Activated B cell treated with CpG ODN at 0.5 μM for 24 hours (primary cell): ENCODE measurements at regions of chr6 and their contacts with region 1.

Region 1: GRCh38 chr6:70221025-70221714 is 81.7 kb downstream of the COL9A1 start:
- DNase-seq: no peak
- ATAC-seq: peak; percentile 68
- H3K4me3 Mint-ChIP-seq: no peak overlapping the region
- H3K27ac Mint-ChIP-seq: no peak overlapping the region
- H3K4me1 Mint-ChIP-seq: peaks cover 6% of the 10 kb centered on the region
- H3K27me3 Mint-ChIP-seq: peaks cover 3% of the 10 kb centered on the region
- CTCF ChIP-seq: no peak

Region 2: GRCh38 chr6:70079241-70079640 is 141.9 kb before region 1 on chr6:
- CTCF ChIA-PET with region 1: no interaction called
- POLR2A ChIA-PET with region 1: no interaction called
- intact Hi-C with region 1: no loop called
- DNase-seq: no peak
- ATAC-seq: no peak
- H3K4me3 Mint-ChIP-seq: no peak overlapping the region
- H3K27ac Mint-ChIP-seq: no peak overlapping the region
- H3K4me1 Mint-ChIP-seq: no peaks in the 10 kb centered on the region
- H3K27me3 Mint-ChIP-seq: no peaks in the 10 kb centered on the region
- CTCF ChIP-seq: no peak

Region 3: GRCh38 chr6:70231311-70231710 is 10.1 kb after region 1 on chr6:
- CTCF ChIA-PET with region 1: interaction called, 25 read pairs
- POLR2A ChIA-PET with region 1: no interaction called
- intact Hi-C with region 1: no loop called
- DNase-seq: no peak
- ATAC-seq: no peak
- H3K4me3 Mint-ChIP-seq: no peak overlapping the region
- H3K27ac Mint-ChIP-seq: no peak overlapping the region
- H3K4me1 Mint-ChIP-seq: no peaks in the 10 kb centered on the region
- H3K27me3 Mint-ChIP-seq: peaks cover 6% of the 10 kb centered on the region
- CTCF ChIP-seq: no peak

Region 4: GRCh38 chr6:70310063-70310694 is 89.0 kb after region 1 on chr6:
- CTCF ChIA-PET with region 1: interaction called, 4 read pairs
- POLR2A ChIA-PET with region 1: no interaction called
- intact Hi-C with region 1: loop called (anchors 5 kb)
- DNase-seq: no peak
- ATAC-seq: no peak
- H3K4me3 Mint-ChIP-seq: no peak overlapping the region
- H3K27ac Mint-ChIP-seq: no peak overlapping the region
- H3K4me1 Mint-ChIP-seq: no peaks in the 10 kb centered on the region
- H3K27me3 Mint-ChIP-seq: peaks cover 11% of the 10 kb centered on the region
- CTCF ChIP-seq: no peak

Region 5: DNA sequence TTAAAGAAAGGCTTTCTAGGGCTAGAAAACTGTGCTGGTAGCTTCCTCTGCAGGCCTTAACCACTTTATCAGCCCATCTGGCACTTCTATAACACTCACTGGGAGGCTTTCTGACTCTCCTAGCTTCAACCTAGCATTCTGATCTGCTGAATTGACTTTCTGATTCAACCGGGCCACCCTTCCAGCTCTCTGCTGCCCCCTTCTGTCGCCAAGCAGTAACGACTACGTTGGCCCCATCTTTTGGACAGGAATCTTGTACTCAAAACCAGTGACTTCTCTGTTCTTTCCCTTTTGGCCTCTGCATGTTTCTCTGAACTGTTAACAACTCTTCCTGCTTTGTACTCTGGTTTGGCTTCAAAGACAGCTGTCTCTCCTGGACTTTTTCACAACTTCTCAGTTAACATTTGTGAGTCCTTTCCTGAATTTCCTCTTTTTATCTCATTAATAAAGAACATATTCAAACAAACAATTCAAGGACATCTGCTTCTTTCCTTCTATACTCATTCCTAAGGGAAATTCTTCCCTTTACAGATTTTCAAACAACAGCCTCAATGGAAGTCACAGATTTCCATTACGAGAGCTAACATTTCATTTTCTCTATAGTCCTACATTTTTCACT is 148.3 kb after region 1 on chr6:
- CTCF ChIA-PET with region 1: interaction called, 42 read pairs
- POLR2A ChIA-PET with region 1: no interaction called
- intact Hi-C with region 1: loop called (anchors 1 kb)
- DNase-seq: peak; percentile 27
- ATAC-seq: peak; percentile 92
- H3K4me3 Mint-ChIP-seq: no peak overlapping the region
- H3K27ac Mint-ChIP-seq: no peak overlapping the region
- H3K4me1 Mint-ChIP-seq: no peaks in the 10 kb centered on the region
- H3K27me3 Mint-ChIP-seq: peaks cover 21% of the 10 kb centered on the region
- CTCF ChIP-seq: peak; percentile 73